HAP-1 (cell line): ENCODE measurements at regions of chr5 and their contacts with region 1.

Region 1: DNA sequence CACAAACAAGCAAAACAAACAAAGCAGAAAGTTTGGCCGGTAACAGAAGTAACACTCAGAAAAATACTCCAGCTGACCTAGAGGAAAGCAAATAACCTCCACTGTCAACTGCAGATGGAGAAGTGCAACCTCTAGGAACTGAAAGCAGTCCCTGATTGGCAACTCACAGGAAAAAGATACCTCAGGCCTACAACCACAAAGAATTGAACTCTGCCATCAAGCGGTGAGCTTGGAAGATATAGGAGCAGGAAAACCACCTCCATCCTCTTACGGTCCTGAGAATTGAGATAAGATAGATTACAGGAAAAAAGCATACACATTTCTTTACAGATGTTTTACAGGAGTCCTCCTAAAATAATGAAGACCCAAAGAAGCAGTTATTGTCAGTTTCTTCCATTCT is 184.5 kb downstream of the PDZD2 start:
- DNase-seq: no peak
- H3K4me3 ChIP-seq: no peak overlapping the region
- H3K4me1 ChIP-seq: peaks cover 4% of the 10 kb centered on the region; the same call in 1 of the 2 replicates
- H3K27me3 ChIP-seq: no peaks in the 10 kb centered on the region

Region 2: GRCh38 chr5:31581498-31582099 is 241.9 kb before region 1 on chr5:
- in situ Hi-C with region 1: loop called (anchors 5 kb)
- DNase-seq: peak; percentile 21 to 50
- H3K4me3 ChIP-seq: no peak overlapping the region
- H3K4me1 ChIP-seq: no peaks in the 10 kb centered on the region
- H3K27me3 ChIP-seq: peaks cover 3% of the 10 kb centered on the region; the same call in 1 of the 2 replicates

Region 3: DNA sequence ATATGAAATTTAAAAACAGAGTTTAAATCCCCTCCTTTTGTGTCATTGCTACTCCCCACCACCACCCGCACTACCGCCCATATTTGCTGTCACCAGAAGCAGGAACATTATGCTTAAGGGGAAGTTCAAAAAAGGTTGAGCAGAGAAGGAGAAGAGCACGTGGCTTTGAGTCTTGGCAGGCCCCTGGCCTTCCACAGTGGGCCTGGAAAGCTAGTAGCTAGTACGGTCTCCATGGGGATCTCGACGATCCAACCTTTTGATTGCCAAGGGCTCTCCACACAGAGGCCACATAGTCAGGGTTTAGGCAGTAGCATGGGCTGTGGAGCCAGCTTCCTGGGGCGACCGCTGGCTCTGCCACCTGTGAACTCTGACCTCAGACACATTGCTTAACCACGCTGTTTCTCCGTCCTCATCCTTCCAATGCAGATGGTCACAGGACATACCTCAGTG is 260.5 kb after region 1 on chr5:
- in situ Hi-C with region 1: loop called (anchors 5 kb)
- DNase-seq: no peak
- H3K4me3 ChIP-seq: no peak overlapping the region
- H3K4me1 ChIP-seq: no peaks in the 10 kb centered on the region
- H3K27me3 ChIP-seq: no peaks in the 10 kb centered on the region

Region 4: DNA sequence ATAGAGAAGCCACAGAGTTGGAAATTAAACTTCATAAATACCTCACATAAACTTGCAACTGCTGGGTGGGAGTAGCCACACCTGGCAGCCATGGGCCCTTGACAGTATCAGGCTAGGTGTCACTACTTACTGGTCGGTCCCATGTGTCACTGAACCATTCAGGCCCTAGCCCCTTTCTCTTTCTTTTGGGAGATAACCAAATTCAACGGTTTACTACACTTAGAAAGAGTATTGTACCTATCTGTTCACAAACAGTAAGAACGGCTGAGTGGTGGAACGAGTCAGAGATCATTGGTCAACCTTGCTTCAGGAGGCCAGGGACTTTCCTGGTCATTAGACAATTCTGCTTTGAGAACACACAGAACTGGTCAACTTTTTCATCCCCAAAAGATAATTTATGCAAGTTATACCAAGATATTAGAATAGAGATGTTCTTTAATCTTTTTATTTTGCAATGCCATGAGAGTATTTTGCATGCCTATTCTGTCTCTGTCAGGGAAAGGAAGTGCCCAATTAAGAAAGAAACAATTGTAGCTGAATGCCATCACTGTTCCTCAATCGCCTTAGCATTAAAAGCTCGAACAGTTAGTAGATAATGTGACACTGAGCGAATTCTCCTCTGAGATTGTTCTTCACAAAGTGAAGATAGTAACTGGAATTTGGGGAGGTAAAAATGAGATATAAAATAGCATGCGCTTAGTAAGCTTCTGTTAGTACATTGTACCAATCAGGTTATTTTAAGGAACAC is 299.8 kb after region 1 on chr5:
- in situ Hi-C with region 1: no loop called
- DNase-seq: no peak
- H3K4me3 ChIP-seq: no peak overlapping the region
- H3K4me1 ChIP-seq: no peaks in the 10 kb centered on the region
- H3K27me3 ChIP-seq: no peaks in the 10 kb centered on the region